ENCODE measurements at regions of chr4 and their contacts with region 1.

Region 1: GRCh38 chr4:133148690-133149363 is at the start of gene PCDH10:
- DNase-seq: peak; percentile 94 to 97
- ATAC-seq: peak; percentile 93
- H3K4me3 ChIP-seq: peak within 1 kb of the TSS; percentile 46 to 58
- H3K27ac ChIP-seq: peak within 1 kb of the TSS; percentile 2 to 5
- H3K4me1 ChIP-seq: no peaks in the 10 kb centered on the region
- H3K27me3 ChIP-seq: no peaks in the 10 kb centered on the region
- total RNA-seq, gene PCDH10: 15.1 to 23.0 TPM

Region 2: GRCh38 chr4:132923516-132923915 is 225.3 kb before region 1 on chr4:
- intact Hi-C with region 1: no loop called
- DNase-seq: no peak
- ATAC-seq: no peak
- H3K4me3 ChIP-seq: no peak overlapping the region
- H3K27ac ChIP-seq: no peak overlapping the region
- H3K4me1 ChIP-seq: no peaks in the 10 kb centered on the region
- H3K27me3 ChIP-seq: no peaks in the 10 kb centered on the region

Region 3: GRCh38 chr4:133483600-133484246 is 334.9 kb after region 1 on chr4:
- intact Hi-C with region 1: loop called (anchors 2 kb)
- DNase-seq: no peak
- ATAC-seq: peak; percentile 44
- H3K4me3 ChIP-seq: no peak overlapping the region
- H3K27ac ChIP-seq: no peak overlapping the region
- H3K4me1 ChIP-seq: no peaks in the 10 kb centered on the region
- H3K27me3 ChIP-seq: no peaks in the 10 kb centered on the region

Region 4: DNA sequence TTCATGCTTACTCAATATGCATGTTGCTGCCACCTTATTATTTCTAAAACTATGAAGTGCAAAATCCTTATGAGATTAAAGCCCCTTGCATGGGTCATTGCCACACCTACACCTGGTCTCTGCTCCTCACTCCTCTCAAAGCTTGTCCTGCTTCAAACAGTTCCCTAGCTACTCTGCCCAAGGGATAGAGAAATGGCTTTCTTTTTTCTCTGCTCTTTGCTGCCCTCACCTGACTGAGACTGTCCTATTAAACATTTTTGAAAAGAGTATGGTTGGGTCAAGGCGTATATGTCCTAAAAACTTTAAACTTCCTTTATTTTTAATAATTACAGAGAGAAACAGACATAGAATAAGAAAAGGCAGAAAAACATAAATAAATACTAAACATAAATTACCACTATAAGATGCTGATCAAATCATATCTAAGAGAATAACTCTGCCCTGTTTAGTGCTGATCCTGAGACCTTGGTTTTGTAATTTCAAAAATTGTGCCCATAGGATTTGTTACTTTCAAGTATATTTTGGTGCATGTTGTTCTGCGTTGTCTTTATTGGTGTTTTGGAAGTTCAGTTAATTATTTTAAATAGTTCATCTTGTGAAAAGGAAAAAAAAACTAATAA is 1757.7 kb after region 1 on chr4:
- intact Hi-C with region 1: loop called in 1 of 2 experiments (anchors 10 kb)
- DNase-seq: no peak
- ATAC-seq: no peak
- H3K4me3 ChIP-seq: no peak overlapping the region
- H3K27ac ChIP-seq: no peak overlapping the region
- H3K4me1 ChIP-seq: no peaks in the 10 kb centered on the region
- H3K27me3 ChIP-seq: no peaks in the 10 kb centered on the region